ENCODE measurements at regions of chr6 and their contacts with region 1.

Region 1: GRCh38 chr6:90586836-90587638 is at the start of gene MAP3K7:
- DNase-seq: peak; percentile 93
- H3K4me3 Mint-ChIP-seq: peak within 1 kb of the TSS; percentile 94
- H3K27ac Mint-ChIP-seq: peak within 1 kb of the TSS; percentile 95
- H3K4me1 Mint-ChIP-seq: peaks cover 42% of the 10 kb centered on the region
- H3K27me3 Mint-ChIP-seq: peaks cover 20% of the 10 kb centered on the region
- total RNA-seq, gene MAP3K7: 30.5 and 32.1 TPM in 2 replicates

Region 2: DNA sequence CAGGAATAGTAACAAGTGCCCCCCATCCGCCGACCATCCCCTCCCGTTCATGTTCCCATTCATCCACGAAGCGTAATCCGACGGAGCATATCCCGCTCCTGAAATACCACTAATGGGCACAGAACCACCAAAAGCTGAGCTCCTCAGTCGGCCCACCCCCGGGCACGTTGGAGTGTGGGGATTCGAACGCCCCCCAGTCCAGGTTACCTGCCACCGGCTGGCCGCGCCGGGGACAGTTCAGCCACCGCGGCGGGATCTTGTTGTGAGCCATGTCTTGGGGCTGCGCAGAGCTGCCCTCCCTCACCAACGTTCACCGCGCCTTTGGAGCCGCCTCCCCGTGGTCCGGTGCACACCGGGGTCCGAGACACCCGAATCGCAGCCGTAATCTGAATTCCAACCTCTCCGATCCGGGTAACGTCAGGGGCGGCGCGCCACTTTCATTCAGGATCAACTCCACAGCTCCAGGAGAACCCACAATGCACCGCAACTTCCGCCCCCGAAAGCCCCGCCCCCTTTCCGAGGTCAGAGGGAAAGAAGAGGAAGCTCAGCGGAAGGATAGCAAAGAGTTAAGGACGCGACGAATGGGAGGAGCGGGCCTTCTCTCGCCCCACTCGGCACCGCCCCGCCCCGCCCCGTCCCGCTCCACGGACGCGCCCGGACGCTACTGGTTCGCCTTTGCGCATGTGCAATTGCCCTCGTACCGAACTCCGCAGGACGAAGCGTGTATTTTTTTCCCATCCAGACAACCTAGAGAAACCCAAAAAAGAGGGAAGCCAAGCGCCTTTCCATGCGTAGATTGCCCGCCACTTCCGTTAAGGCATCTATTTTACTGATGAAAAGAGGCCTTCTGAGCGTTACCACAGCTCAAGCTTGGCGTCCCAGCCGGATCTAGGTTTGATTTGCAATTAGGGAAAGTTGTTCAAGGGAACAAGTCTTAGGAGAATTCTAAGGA is 1623.6 kb before region 1 on chr6 and contains the start of gene RNGTT:
- intact Hi-C with region 1: loop called (anchors 1 kb)
- DNase-seq: peak; percentile 95
- H3K4me3 Mint-ChIP-seq: peak within 1 kb of the TSS; percentile 97
- H3K27ac Mint-ChIP-seq: peak within 1 kb of the TSS; percentile 83
- H3K4me1 Mint-ChIP-seq: peaks cover 30% of the 10 kb centered on the region
- H3K27me3 Mint-ChIP-seq: peaks cover 2% of the 10 kb centered on the region
- total RNA-seq, gene RNGTT: 23.5 and 24.2 TPM in 2 replicates

Region 3: DNA sequence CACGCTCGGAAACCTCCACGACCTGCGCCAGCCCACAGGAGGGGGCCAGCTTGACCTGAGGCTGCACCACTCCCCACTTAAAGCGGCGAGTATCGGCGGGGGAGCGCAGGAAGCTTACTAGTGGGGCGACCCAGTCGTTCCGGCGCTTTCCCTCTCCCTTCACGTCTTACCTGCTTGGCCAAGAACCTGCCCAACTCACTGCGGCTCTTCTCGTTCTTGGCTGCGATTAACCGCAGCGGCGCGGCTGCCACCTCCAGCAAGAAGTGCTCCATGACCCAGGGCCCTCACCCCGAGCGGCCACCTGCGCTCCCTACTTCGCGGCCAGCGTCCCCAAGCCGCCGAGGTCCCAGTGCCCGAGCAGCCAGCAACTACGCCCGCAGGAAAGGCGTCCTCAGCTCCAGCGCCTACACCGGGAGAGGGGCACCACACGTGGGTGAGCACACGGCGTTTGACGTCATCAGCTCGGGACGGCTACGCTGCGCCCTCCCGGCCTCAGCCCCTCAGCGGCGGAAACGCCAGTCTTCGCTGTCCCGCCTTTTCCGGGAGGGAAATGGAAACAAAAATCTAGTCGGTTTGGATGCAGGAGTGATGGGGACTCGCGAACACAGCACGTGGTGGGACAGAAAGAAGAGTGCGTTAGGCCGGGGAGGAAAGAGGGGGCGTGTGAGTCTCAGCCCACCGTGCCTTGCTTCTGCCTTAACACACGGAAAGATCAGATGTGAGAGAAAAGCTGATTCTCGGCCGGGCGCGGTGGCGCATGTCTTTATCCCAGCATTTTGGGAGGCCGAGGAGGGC is 767.5 kb before region 1 on chr6 and contains the start of gene MDN1:
- intact Hi-C with region 1: loop called (anchors 1 kb)
- DNase-seq: peak; percentile 87
- H3K4me3 Mint-ChIP-seq: peak within 1 kb of the TSS; percentile 91
- H3K27ac Mint-ChIP-seq: peak within 1 kb of the TSS; percentile 97
- H3K4me1 Mint-ChIP-seq: peaks cover 21% of the 10 kb centered on the region
- H3K27me3 Mint-ChIP-seq: no peaks in the 10 kb centered on the region
- total RNA-seq, gene MDN1: 61.7 and 66.5 TPM in 2 replicates

Region 4: GRCh38 chr6:89829591-89830385 is 757.2 kb before region 1 on chr6 and contains the start of gene CASP8AP2:
- intact Hi-C with region 1: loop called (anchors 1 kb)
- DNase-seq: peak; percentile 93
- H3K4me3 Mint-ChIP-seq: peak within 1 kb of the TSS; percentile 98
- H3K27ac Mint-ChIP-seq: peak within 1 kb of the TSS; percentile 95
- H3K4me1 Mint-ChIP-seq: peaks cover 23% of the 10 kb centered on the region
- H3K27me3 Mint-ChIP-seq: no peaks in the 10 kb centered on the region
- total RNA-seq, gene CASP8AP2: 31.8 and 32.8 TPM in 2 replicates

Region 5: GRCh38 chr6:90569223-90569622 is 17.8 kb before region 1 on chr6:
- intact Hi-C with region 1: no loop called
- DNase-seq: no peak
- H3K4me3 Mint-ChIP-seq: no peak overlapping the region
- H3K27ac Mint-ChIP-seq: no peak overlapping the region
- H3K4me1 Mint-ChIP-seq: peaks cover 4% of the 10 kb centered on the region
- H3K27me3 Mint-ChIP-seq: no peaks in the 10 kb centered on the region

Region 6: DNA sequence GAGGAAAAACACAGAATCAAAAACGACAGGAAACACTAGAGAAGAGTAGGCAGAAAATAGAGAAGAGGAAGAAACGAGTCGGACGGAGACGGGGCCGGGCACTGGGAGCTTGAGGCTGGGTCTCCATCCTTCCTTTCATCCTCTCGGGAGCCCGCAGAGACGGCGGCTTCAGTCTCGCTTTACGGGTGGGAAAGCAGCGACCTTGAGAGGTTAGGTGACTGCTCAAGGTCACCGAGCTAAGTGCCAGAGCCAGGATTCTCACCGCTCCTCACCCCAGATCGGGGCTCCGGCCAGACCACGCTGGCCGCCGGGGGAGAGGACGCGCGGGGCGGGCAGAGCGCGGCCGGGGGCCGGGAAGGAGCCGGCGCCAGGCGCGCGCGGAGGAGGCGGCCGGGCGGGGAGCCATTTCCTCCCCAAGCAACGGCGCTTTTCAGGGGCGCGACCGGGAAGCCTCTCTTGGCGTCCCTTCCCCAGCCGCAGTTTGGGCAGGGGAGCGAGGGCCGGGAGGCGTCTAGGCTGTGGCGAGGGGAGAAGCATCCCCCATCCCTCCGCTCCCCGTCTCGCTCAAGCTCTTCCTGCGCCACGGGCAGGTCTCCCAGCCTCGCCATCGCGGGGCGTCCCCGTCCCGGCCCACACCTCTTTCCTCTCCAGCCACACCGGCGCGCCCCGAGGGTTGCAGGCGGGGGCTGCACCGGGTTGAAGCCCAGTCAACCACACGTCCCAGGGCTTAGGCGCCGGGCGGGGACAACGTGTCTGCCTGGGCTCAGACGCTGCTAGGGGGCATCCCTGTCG is 23.9 kb after region 1 on chr6:
- intact Hi-C with region 1: loop called (anchors 1 kb)
- DNase-seq: no peak
- H3K4me3 Mint-ChIP-seq: peak overlapping the region; percentile 83
- H3K27ac Mint-ChIP-seq: no peak overlapping the region
- H3K4me1 Mint-ChIP-seq: peaks cover 9% of the 10 kb centered on the region
- H3K27me3 Mint-ChIP-seq: peaks cover 62% of the 10 kb centered on the region

Region 7: GRCh38 chr6:90651641-90652040 is 64.6 kb after region 1 on chr6:
- intact Hi-C with region 1: no loop called
- DNase-seq: no peak
- H3K4me3 Mint-ChIP-seq: no peak overlapping the region
- H3K27ac Mint-ChIP-seq: no peak overlapping the region
- H3K4me1 Mint-ChIP-seq: no peaks in the 10 kb centered on the region
- H3K27me3 Mint-ChIP-seq: peaks cover 18% of the 10 kb centered on the region

Region 8: GRCh38 chr6:90860822-90861601 is 274.0 kb after region 1 on chr6:
- intact Hi-C with region 1: no loop called
- DNase-seq: no peak
- H3K4me3 Mint-ChIP-seq: no peak overlapping the region
- H3K27ac Mint-ChIP-seq: no peak overlapping the region
- H3K4me1 Mint-ChIP-seq: peaks cover 4% of the 10 kb centered on the region
- H3K27me3 Mint-ChIP-seq: peaks cover 6% of the 10 kb centered on the region

Measured in activated T-helper 2 cell treated with anti-CD3 and anti-CD28 coated beads, Interferon-gamma antibody, Interleukin-2, Interleukin-4, amounts not matched to agents 10 μg/mL and 5 μg/mL and 100 μg/mL, durations not matched to agents 14 hours and 24 hours and 36 hours (primary cell).